Mammary epithelial cell (primary cell): ENCODE measurements at regions of chr2 and their contacts with region 1.

Region 1: DNA sequence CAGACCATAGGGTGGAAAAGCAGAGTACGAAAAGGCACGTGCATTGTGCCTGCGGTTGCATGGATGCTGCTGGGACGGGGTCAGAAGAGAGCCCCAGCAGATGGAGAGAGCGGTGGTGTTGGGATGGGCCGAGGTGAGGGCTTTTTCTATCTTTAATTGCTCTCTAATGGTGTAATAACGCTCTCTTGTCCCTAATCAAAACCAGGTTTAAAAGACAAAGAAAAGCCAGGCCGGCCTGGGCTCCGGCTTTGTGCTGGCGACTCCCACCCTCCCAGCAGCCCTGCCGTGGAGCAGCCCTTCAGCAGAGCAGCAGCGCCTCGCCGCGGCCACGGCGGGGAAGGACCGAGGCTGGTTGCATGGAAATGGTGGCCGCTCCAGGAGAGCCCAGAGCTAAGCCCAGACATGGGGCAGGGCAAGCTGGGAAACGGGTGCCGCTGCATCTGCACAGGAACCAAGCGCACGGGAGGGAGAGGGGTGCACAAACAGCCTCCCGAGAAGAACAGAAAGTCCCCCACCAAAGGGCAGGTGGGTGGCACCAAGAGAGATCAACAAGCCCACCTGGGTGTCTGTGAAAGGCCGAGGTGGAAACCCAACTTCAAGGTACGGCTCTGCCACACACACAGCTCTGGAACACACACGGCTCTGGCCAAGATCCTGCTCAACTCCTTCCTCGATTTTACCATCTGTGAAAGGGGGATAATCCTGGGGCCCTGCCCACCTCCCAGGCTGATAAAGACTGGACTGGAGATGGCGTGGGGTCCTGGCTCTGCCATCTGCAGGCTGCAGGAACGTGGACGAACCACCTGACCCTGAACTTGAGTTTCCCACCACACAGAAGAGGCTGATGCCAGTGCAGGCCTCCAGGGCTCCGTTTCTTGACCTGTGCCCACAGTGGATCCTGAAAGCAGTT is 15.0 kb downstream of the HS1BP3 start:
- DNase-seq: peak; percentile 30
- H3K4me3 ChIP-seq: no peak overlapping the region
- H3K27ac ChIP-seq: no peak overlapping the region
- H3K4me1 ChIP-seq: peaks cover 23% of the 10 kb centered on the region
- H3K27me3 ChIP-seq: no peaks in the 10 kb centered on the region
- CTCF ChIP-seq: peak; percentile 94 to 96

Region 2: DNA sequence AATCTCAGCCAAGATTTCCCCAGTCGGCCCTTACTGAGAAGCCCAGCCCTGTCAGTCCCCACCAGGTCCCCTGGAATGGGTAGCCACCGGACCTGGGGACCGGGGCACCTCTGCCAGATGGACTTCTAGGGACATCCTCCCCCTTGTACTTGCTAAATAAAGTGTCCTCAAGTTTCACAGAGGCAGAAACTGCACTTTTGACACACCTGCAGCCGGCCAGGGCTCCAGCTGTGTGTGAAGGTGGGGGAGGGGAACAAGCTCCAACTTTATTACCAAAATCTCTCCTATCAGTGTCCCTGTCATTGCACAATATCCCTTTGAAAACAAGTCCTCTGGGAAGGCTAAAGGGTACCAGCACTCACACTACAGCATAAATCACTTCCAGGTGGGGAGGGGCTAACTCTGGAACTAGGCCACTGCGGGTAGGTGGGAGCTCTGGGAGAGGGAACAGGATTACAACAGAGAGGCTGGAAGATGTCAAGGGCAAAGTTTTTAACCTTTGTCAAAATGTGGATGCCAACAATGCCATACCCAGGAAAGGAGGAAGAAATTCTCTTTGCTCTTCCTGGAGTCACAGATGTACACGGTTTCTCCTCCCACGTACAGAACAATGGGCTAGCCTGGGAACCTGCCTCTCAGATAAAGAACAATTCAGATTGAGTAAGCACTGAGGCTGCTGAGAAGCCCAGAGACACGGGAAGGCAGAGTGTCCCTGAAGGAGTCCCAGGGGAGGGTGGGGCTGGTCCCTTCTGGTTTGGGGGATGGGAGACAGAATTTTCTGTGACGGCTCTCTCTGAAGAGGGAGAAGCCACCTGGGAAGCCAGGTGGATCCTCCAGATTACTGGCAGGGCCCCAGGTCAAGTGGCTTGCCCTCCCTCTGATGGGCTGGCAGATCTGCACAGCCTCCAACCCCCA is 422.0 kb before region 1 on chr2:
- CTCF ChIA-PET with region 1: no interaction called
- dilution Hi-C with region 1: no loop called
- in situ Hi-C with region 1: no loop called
- intact Hi-C with region 1: no loop called
- DNase-seq: peak; percentile 70
- H3K4me3 ChIP-seq: no peak overlapping the region
- H3K27ac ChIP-seq: peak overlapping the region; percentile 90
- H3K4me1 ChIP-seq: peaks cover 99% of the 10 kb centered on the region
- H3K27me3 ChIP-seq: no peaks in the 10 kb centered on the region
- CTCF ChIP-seq: no peak

Region 3: DNA sequence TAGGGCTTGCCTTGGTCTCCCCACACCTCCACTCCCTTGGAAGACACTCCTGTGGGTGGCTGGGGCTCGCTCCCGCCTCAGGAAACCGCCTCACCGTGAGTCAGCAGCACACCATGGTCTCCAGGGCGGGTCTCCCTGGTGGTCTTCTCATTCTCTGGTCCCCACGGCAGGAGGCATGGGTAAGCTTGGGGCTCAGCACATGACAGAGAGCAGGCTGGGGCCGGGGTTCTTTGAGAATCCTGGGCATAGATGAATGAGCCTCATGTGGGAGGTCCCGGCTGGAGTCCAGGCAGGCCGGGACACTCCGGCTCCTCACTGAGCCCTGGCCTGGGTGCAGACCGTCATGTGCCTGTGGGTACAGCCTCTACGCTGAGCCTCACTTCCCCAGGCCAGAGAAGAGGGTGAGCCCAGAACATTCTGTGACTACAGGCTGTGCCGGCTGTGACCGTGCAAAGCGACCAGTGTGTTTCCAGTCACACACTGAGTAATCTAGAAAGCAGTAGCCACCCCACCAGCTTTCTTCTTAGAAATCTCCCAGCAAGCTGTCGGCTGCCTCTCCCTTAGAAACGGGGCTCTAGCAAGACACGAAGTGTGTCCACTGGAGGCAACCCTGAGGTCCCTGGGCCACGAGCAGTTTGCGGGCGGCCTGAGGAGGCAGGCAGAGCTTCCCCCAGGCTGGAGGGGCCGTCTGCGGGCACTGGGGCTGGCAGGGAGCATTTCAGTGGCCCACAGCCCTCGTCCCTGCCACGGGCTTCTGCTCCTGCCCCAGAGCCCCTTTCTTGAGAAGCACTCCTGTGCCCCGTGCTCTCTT is 95.9 kb before region 1 on chr2:
- CTCF ChIA-PET with region 1: no interaction called
- dilution Hi-C with region 1: no loop called
- in situ Hi-C with region 1: no loop called
- intact Hi-C with region 1: loop called (anchors 2 kb)
- DNase-seq: no peak
- H3K4me3 ChIP-seq: no peak overlapping the region
- H3K27ac ChIP-seq: no peak overlapping the region
- H3K4me1 ChIP-seq: peaks cover 8% of the 10 kb centered on the region
- H3K27me3 ChIP-seq: no peaks in the 10 kb centered on the region
- CTCF ChIP-seq: no peak

Region 4: GRCh38 chr2:20603791-20604190 is 32.1 kb before region 1 on chr2:
- CTCF ChIA-PET with region 1: interaction called, 4 read pairs
- dilution Hi-C with region 1: no loop called
- in situ Hi-C with region 1: no loop called
- intact Hi-C with region 1: loop called (anchors 2 kb)
- DNase-seq: no peak
- H3K4me3 ChIP-seq: no peak overlapping the region
- H3K27ac ChIP-seq: no peak overlapping the region
- H3K4me1 ChIP-seq: peaks cover 11% of the 10 kb centered on the region
- H3K27me3 ChIP-seq: no peaks in the 10 kb centered on the region
- CTCF ChIP-seq: no peak